Adrenal gland (tissue), 19 donors: ENCODE measurements at regions of chr1 and their contacts with region 1.

Region 1: DNA sequence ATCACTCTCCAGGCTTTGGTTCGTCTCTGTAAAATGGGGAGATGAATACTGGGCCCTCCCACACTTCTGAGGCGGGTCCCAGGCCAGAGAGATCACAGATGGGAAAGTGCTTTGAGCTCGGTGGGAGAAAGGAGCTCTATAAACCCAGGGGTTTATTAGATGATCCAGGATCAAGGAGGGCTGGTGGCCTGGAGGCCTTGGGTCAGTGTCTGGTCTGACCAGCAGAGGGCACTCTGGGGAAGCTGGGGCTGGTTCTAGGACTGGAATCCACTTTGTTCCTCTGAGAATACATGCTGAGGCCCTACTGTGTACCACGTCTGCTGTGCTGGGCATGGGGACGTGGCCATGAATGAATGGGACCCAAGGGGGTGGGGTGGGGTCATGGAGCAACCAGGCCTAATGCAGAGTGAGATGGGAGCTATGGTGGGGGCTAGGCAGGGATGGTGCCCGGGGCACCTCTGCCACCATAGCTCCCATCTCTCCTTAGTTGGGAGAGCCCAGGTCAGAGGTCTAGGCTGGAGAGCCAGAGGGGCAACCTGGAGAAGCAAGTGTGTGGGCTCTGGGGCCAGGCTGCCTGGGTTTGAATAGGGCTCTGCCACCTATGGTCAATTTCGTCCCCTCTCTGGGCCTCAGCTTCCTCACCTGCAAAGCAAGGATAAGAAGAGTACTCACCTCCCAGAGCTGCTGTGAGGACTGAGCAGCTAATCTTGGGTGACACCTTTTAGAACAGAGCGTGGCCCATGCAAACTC is 9.0 kb upstream of the FAM131C start:
- DNase-seq: peak; percentile 51 to 85 (median 74)
- H3K4me3 ChIP-seq: no peak overlapping the region
- H3K27ac ChIP-seq: no peak overlapping the region
- H3K4me1 ChIP-seq: peaks cover 0 to 5% of the 10 kb centered on the region in 2 donors
- H3K27me3 ChIP-seq: no peaks in the 10 kb centered on the region
- CTCF ChIP-seq: peak; percentile 73 to 86 (median 82)
- POLR2A ChIP-seq: no peak

Region 2: GRCh38 chr1:15966081-15966955 is 116.1 kb before region 1 on chr1:
- intact Hi-C with region 1: no loop called
- DNase-seq: peak in 2 of 7 donors; percentile 40 to 61
- H3K4me3 ChIP-seq: no peak overlapping the region
- H3K27ac ChIP-seq: peak overlapping the region in 1 of 5 donors; percentile 51
- H3K4me1 ChIP-seq: peaks cover 18 to 57% of the 10 kb centered on the region in 2 donors
- H3K27me3 ChIP-seq: no peaks in the 10 kb centered on the region
- CTCF ChIP-seq: no peak
- POLR2A ChIP-seq: no peak

Region 3: DNA sequence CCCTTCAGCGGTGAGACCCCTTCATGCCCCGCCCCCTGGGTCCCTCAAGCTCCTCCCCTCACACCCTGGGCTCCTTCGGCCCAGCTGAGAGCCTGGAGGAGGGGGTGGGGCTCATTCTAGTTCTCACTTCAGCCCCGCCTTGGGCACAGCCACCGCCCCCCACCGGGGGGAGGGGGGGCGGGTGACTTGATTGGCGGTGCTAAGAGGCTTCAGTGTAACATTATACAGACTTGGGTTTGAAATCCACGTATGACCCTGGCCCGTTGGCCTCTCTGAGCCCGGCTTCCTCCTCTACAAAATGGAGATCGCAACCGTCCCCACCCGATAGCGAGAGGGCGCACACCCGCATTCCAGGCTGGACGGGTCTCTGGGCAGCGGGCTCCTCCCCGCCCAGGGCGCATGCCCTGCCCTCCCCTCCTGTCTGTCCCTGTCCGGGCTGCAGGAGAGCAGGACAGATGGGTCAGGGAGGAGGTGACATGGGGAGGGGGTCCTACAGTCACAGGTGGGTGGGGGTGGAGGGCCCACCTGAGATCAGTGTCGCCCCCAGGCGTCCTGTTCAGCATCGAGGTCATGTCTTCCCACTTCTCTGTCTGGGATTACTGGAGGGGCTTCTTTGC is 33.8 kb before region 1 on chr1:
- intact Hi-C with region 1: no loop called
- DNase-seq: peak in 2 of 7 donors; percentile 39 to 72
- H3K4me3 ChIP-seq: peak overlapping the region in 1 of 4 donors; percentile 52
- H3K27ac ChIP-seq: no peak overlapping the region
- H3K4me1 ChIP-seq: no peaks in the 10 kb centered on the region
- H3K27me3 ChIP-seq: no peaks in the 10 kb centered on the region
- CTCF ChIP-seq: no peak
- POLR2A ChIP-seq: no peak

Region 4: GRCh38 chr1:16139473-16139962 is 57.1 kb after region 1 on chr1:
- intact Hi-C with region 1: loop called in 1 of 2 experiments (anchors 10 kb)
- DNase-seq: no peak
- H3K4me3 ChIP-seq: no peak overlapping the region
- H3K27ac ChIP-seq: peak overlapping the region in 4 of 5 donors; percentile 58 to 98 (median 70)
- H3K4me1 ChIP-seq: peaks cover 31 to 55% of the 10 kb centered on the region in 2 donors
- H3K27me3 ChIP-seq: no peaks in the 10 kb centered on the region
- CTCF ChIP-seq: no peak
- POLR2A ChIP-seq: no peak

Region 5: DNA sequence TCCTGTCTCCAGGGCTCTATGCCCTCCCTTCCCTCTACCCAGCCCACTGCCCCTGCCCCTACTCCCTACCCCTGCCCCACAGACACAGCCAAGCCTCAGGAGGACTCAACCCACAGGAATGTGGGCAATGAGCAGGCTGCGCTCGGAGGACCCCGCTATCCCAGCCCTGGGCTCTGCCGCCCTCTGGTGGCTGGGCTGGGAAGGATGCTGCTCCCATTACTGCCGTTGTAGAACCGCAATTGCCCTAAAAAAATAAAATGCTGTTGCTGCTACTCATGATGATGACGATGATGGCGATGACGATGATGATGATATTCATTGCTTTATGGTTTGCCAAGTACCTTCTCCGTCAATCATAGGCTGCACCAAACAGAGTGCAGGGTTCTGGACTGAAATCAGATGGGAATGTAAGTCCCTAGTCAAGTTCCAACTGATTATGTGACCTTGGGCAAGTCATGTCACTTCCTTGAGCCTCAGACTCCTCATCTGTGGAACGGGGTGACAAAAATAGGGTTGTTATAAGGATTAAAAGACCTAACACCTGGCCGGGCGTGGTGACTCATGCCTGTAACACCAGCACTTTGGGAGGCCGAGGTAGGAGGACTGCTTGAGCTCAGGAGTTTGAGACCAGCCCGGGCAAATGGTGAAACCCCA is 105.4 kb after region 1 on chr1:
- intact Hi-C with region 1: loop called (anchors 1 to 2 kb)
- DNase-seq: peak; percentile 62 to 88 (median 77)
- H3K4me3 ChIP-seq: no peak overlapping the region
- H3K27ac ChIP-seq: peak overlapping the region in 1 of 5 donors; percentile 46
- H3K4me1 ChIP-seq: peaks cover 4 to 8% of the 10 kb centered on the region in 2 donors
- H3K27me3 ChIP-seq: no peaks in the 10 kb centered on the region
- CTCF ChIP-seq: peak; percentile 90 to 99 (median 98)
- POLR2A ChIP-seq: no peak

Region 6: DNA sequence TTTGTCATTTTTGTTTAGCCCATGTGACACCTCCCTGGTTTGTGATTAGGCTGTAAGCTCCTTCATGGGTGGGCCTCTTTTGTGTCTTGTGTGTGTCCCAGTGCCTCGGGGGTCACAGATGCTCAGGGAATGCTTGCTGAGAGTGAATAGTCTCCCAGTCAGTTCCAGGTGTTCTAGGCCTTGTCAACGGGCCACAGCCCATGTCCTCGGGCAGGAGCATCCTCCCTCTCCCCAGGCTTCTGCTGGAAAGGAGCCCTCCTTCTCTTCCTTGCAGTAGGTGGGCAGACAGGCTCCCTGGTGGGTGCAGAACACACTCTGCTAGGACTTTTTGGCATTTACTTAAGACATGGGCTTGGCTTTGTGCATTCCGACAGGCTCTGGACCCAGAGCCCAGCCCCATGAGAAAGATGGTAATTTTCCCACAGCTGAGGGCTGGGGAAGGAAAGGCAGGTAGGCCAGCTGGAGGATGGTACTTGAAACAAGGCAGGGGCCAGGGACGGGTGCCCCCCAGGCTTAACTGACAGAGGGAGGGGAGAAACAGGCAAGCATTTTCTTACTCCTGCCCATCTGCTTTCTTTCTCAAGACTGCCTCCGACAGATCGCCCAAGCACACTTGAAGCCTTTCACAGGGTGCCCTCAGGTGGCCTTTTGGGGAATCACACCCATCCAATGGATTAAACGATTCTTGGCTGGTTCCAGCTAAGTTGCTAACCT is 161.6 kb after region 1 on chr1:
- intact Hi-C with region 1: loop called in 1 of 2 experiments (anchors 5 kb)
- DNase-seq: peak; percentile 76 to 95 (median 88)
- H3K4me3 ChIP-seq: no peak overlapping the region
- H3K27ac ChIP-seq: peak overlapping the region in 2 of 5 donors; percentile 42 to 48
- H3K4me1 ChIP-seq: peaks cover 13 to 23% of the 10 kb centered on the region in 2 donors
- H3K27me3 ChIP-seq: no peaks in the 10 kb centered on the region
- CTCF ChIP-seq: peak; percentile 74 to 89 (median 86)
- POLR2A ChIP-seq: no peak

Region 7: GRCh38 chr1:16351994-16352841 is 269.8 kb after region 1 on chr1 and contains the start of gene FBXO42:
- intact Hi-C with region 1: loop called (anchors 10 kb)
- DNase-seq: peak; percentile 87 to 94 (median 90)
- H3K4me3 ChIP-seq: peak within 1 kb of the TSS; percentile 43 to 99 (median 78)
- H3K27ac ChIP-seq: peak within 1 kb of the TSS; percentile 55 to 98 (median 93)
- H3K4me1 ChIP-seq: peaks cover 0 to 36% of the 10 kb centered on the region in 2 donors
- H3K27me3 ChIP-seq: no peaks in the 10 kb centered on the region
- CTCF ChIP-seq: peak in 4 of 6 experiments; percentile 32 to 59 (median 44)
- POLR2A ChIP-seq: peak; percentile 79 to 96
- total RNA-seq, gene FBXO42: 17.3 to 44.9 (median 20.2) TPM